A549 (cell line): ENCODE measurements at regions of chr5 and their contacts with region 1.

Region 1: GRCh38 chr5:145708169-145708568 is 127.0 kb downstream of the PRELID2 start:
- DNase-seq: no peak
- ATAC-seq: no peak
- H3K4me3 ChIP-seq: no peak overlapping the region
- H3K27ac ChIP-seq: no peak overlapping the region
- H3K4me1 ChIP-seq: no peaks in the 10 kb centered on the region
- CTCF ChIP-seq: no peak
- EP300 ChIP-seq: no peak
- POLR2A ChIP-seq: no peak
- RAD21 ChIP-seq: no peak

Region 2: DNA sequence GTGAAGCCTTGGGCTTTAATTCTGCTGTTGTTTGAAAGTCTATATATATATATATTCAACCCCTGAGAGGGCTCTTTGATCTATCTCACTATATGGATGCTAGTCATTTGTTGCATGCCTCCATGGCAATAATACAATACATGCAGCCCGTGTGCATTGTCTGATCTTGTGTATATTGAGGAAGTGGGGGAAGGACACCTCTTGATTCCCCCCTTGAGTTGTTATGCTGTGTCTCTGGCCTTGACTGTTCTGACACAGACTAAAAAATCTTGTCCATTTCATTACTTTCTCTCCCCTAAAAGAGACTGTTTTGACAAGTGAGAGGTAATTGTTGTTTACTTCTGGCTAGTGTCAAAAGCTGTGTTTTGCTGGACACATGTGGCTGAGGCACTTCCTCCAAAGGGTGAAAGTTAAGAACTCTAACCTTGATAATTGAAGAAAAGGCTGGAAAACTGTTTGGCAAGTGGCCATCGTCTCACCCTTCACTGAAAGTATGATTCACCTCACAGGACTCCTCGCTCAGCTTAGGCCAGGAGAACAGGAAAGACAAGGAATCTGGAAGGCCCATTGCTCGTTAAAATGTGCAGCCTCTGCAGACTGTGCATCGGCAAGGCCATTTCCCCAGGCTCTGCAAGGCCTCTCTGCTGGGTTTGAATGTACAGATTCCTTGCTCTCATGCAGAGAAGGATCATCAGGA is 177.0 kb before region 1 on chr5:
- CTCF ChIA-PET with region 1: no interaction called
- POLR2A ChIA-PET with region 1: no interaction called
- DNase-seq: peak; percentile 10 to 48
- ATAC-seq: peak; percentile 81 to 88
- H3K4me3 ChIP-seq: no peak overlapping the region
- H3K27ac ChIP-seq: peak overlapping the region in 1 of 2 experiments; percentile 54; a peak in 3 of 6 replicates
- H3K4me1 ChIP-seq: peaks cover 12% of the 10 kb centered on the region
- CTCF ChIP-seq: no peak
- EP300 ChIP-seq: no peak
- POLR2A ChIP-seq: no peak
- RAD21 ChIP-seq: 0 out of 5 replicates have a peak, but pooled peaks of 1 of the 2 experiments have one; percentile 10

Region 3: GRCh38 chr5:145718956-145719355 is 10.8 kb after region 1 on chr5:
- CTCF ChIA-PET with region 1: interaction called, 11 read pairs
- POLR2A ChIA-PET with region 1: interaction called, 3 read pairs
- DNase-seq: peak; percentile 10 to 32
- ATAC-seq: peak; percentile 62 to 73; a peak in 3 of 6 replicates
- H3K4me3 ChIP-seq: no peak overlapping the region
- H3K27ac ChIP-seq: no peak overlapping the region
- H3K4me1 ChIP-seq: 0 out of 3 replicates have a peak, but pooled peaks cover 3% of the 10 kb centered on the region
- CTCF ChIP-seq: peak; percentile 56
- EP300 ChIP-seq: no peak
- POLR2A ChIP-seq: no peak
- RAD21 ChIP-seq: peak; percentile 53 to 56; a peak in 4 of 5 replicates